CD8-positive, alpha-beta T cell (primary cell): ENCODE measurements at regions of chr13 and their contacts with region 1.

Region 1: GRCh38 chr13:35046587-35046986 is 104.5 kb downstream of the NBEA start:
- DNase-seq: no peak
- ATAC-seq: no peak
- H3K4me3 ChIP-seq: no peak overlapping the region
- H3K4me3 Mint-ChIP-seq: no peak overlapping the region
- H3K27ac ChIP-seq: no peak overlapping the region
- H3K27ac Mint-ChIP-seq: no peak overlapping the region
- H3K4me1 ChIP-seq: no peaks in the 10 kb centered on the region
- H3K4me1 Mint-ChIP-seq: no peaks in the 10 kb centered on the region
- H3K27me3 ChIP-seq: no peaks in the 10 kb centered on the region
- H3K27me3 Mint-ChIP-seq: no peaks in the 10 kb centered on the region
- CTCF ChIP-seq: no peak

Region 2: GRCh38 chr13:34988330-34988791 is 58.2 kb before region 1 on chr13:
- CTCF ChIA-PET with region 1: no interaction called
- POLR2A ChIA-PET with region 1: no interaction called
- intact Hi-C with region 1: loop called in 1 of 2 experiments (anchors 10 kb)
- DNase-seq: no peak
- ATAC-seq: no peak
- H3K4me3 ChIP-seq: no peak overlapping the region
- H3K4me3 Mint-ChIP-seq: no peak overlapping the region
- H3K27ac ChIP-seq: no peak overlapping the region
- H3K27ac Mint-ChIP-seq: no peak overlapping the region
- H3K4me1 ChIP-seq: no peaks in the 10 kb centered on the region
- H3K4me1 Mint-ChIP-seq: no peaks in the 10 kb centered on the region
- H3K27me3 ChIP-seq: no peaks in the 10 kb centered on the region
- H3K27me3 Mint-ChIP-seq: no peaks in the 10 kb centered on the region
- CTCF ChIP-seq: no peak